ENCODE measurements at regions of chr10 and their contacts with region 1.

Region 1: DNA sequence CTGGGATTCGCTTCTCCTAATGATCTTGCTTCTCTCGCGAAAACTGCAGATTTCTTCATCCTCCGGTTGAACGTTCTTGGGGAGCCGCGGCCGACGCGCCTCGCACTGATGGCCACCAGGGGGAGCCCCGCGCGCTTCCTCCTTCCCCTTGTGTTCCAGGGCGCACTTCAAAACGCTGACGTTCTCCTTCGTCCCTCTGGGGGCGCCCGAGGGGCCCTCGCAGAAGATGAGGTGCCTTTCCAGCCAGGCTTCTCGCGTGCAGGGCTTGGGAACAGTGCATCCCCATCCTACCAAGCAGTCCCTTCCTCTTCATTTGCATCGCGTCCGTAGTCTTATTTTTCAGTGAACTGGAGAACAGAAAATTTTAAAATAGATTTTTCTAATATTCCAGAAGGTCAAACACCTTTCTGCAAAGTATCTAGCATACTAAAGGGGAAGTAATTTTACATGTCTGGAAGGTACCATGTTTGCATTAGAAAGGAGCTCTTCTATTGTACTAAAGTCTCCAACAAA is 22.5 kb downstream of the GSTO2 start:
- DNase-seq: peak; percentile 83 to 86 (median 85)
- H3K4me3 ChIP-seq: no peak overlapping the region
- H3K4me3 Mint-ChIP-seq: peak overlapping the region in 2 of 8 donors; percentile 26 to 74
- H3K27ac ChIP-seq: no peak overlapping the region
- H3K27ac Mint-ChIP-seq: peak overlapping the region in 2 of 7 donors; percentile 24 to 25
- H3K4me1 ChIP-seq: peaks cover 5% of the 10 kb centered on the region
- H3K4me1 Mint-ChIP-seq: peaks cover 4 to 6% (median 5%) of the 10 kb centered on the region in 4 donors
- H3K27me3 ChIP-seq: no peaks in the 10 kb centered on the region
- H3K27me3 Mint-ChIP-seq: peaks cover 11 to 20% of the 10 kb centered on the region in 2 donors

Region 2: GRCh38 chr10:104260775-104261115 is 30.8 kb before region 1 on chr10:
- CTCF ChIA-PET with region 1: interaction called, 13 read pairs
- POLR2A ChIA-PET with region 1: no interaction called
- intact Hi-C with region 1: no loop called
- DNase-seq: no peak
- H3K4me3 ChIP-seq: no peak overlapping the region
- H3K4me3 Mint-ChIP-seq: peak overlapping the region in 6 of 8 donors; percentile 12 to 34 (median 18)
- H3K27ac ChIP-seq: peak overlapping the region; percentile 17
- H3K27ac Mint-ChIP-seq: peak overlapping the region; percentile 48 to 90 (median 64)
- H3K4me1 ChIP-seq: peaks cover 95% of the 10 kb centered on the region
- H3K4me1 Mint-ChIP-seq: peaks cover 60 to 89% (median 76%) of the 10 kb centered on the region in 4 donors
- H3K27me3 ChIP-seq: no peaks in the 10 kb centered on the region
- H3K27me3 Mint-ChIP-seq: no peaks in the 10 kb centered on the region

Region 3: DNA sequence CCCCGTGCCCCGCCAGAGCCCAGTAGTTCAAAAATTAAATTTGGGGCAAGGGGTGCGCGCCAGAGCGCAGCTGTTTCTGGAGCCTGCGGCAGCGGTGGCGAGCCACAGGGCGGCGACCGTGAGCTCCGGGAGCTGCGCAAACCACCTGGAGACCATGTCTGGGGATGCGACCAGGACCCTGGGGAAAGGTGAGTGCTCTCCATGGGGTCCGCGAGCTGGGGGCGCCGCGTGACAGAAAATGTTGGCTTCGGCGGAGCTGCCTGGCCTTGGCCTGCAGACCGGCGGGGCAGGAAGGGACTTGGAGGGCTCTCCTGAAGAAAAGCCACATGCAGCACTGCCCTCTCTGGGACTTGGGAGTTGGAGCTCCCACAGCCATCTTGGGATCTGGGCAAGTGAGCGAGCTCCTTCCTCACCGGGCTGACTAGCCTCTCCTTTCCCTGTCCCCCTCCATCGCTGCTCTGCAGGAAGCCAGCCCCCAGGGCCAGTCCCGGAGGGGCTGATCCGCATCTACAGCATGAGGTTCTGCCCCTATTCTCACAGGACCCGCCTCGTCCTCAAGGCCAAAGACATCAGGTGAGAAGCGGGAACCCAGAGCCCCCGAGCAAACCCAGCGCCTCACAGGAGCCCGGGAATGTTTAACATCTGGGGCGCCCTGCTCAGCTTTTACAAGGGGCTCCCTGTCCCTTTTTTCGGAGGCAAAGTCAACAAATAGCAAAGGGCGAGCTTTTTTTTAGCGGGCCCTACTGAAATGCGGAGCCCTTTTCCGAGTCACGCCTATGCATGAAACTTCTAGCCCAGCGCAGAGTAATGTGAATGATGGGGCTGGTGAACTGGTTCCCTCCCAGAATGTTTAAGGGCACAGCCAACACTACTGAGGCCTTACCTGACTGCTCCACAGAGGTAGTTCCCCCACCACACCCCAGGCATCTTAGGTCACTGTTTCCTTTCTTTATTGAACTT is 16.5 kb before region 1 on chr10:
- CTCF ChIA-PET with region 1: interaction called, 202 read pairs
- POLR2A ChIA-PET with region 1: interaction called, 4 read pairs
- intact Hi-C with region 1: no loop called
- DNase-seq: peak in 3 of 5 donors; percentile 36 to 43 (median 40)
- H3K4me3 ChIP-seq: no peak overlapping the region
- H3K4me3 Mint-ChIP-seq: peak overlapping the region in 6 of 8 donors; percentile 10 to 71 (median 54)
- H3K27ac ChIP-seq: no peak overlapping the region
- H3K27ac Mint-ChIP-seq: peak overlapping the region in 1 of 7 donors; percentile 35
- H3K4me1 ChIP-seq: peaks cover 11% of the 10 kb centered on the region
- H3K4me1 Mint-ChIP-seq: no peaks in the 10 kb centered on the region
- H3K27me3 ChIP-seq: no peaks in the 10 kb centered on the region
- H3K27me3 Mint-ChIP-seq: peaks cover 9 to 10% of the 10 kb centered on the region in 2 donors

Region 4: DNA sequence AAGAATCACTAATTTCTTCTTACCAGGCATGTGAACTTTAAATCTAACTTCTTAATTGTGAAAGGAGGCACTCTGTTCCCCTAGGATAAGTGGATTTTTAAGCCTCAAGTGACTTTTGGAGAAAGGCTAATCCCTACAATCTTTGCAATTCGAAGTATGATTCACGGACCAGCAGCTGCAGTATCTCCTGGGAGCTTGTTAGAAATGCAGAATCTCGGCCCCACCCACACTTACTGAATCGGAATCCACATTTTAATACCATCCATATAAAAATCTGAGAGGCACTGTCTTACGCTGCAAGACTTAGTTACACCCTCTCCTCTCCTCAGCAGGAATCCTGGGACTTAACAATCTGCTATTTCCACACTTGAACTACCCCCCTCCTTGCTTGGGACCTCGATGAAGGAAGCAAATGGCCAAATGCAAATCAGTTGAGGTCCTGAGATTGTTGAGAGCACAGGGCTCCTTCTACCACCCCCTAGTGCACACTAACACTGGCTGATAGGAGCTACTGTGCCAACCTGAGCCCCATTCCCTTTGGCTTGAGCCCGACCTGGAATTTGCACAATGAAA is 25.8 kb after region 1 on chr10:
- CTCF ChIA-PET with region 1: interaction called, 47 read pairs
- POLR2A ChIA-PET with region 1: no interaction called
- intact Hi-C with region 1: no loop called
- DNase-seq: no peak
- H3K4me3 ChIP-seq: no peak overlapping the region
- H3K4me3 Mint-ChIP-seq: no peak overlapping the region
- H3K27ac ChIP-seq: no peak overlapping the region
- H3K27ac Mint-ChIP-seq: peak overlapping the region in 3 of 7 donors; percentile 17 to 64 (median 19)
- H3K4me1 ChIP-seq: peaks cover 33% of the 10 kb centered on the region
- H3K4me1 Mint-ChIP-seq: peaks cover 26 to 62% (median 48%) of the 10 kb centered on the region in 4 donors
- H3K27me3 ChIP-seq: no peaks in the 10 kb centered on the region
- H3K27me3 Mint-ChIP-seq: no peaks in the 10 kb centered on the region

Region 5: GRCh38 chr10:104328896-104329710 is 37.6 kb after region 1 on chr10:
- CTCF ChIA-PET with region 1: interaction called, 17 read pairs
- POLR2A ChIA-PET with region 1: no interaction called
- intact Hi-C with region 1: no loop called
- DNase-seq: peak; percentile 73 to 96 (median 77)
- H3K4me3 ChIP-seq: peak overlapping the region; percentile 26 to 32
- H3K4me3 Mint-ChIP-seq: peak overlapping the region; percentile 75 to 90 (median 82)
- H3K27ac ChIP-seq: peak overlapping the region; percentile 64
- H3K27ac Mint-ChIP-seq: peak overlapping the region; percentile 89 to 98 (median 96)
- H3K4me1 ChIP-seq: peaks cover 100% of the 10 kb centered on the region
- H3K4me1 Mint-ChIP-seq: peaks cover 68 to 100% (median 93%) of the 10 kb centered on the region in 4 donors
- H3K27me3 ChIP-seq: no peaks in the 10 kb centered on the region
- H3K27me3 Mint-ChIP-seq: no peaks in the 10 kb centered on the region

Region 6: DNA sequence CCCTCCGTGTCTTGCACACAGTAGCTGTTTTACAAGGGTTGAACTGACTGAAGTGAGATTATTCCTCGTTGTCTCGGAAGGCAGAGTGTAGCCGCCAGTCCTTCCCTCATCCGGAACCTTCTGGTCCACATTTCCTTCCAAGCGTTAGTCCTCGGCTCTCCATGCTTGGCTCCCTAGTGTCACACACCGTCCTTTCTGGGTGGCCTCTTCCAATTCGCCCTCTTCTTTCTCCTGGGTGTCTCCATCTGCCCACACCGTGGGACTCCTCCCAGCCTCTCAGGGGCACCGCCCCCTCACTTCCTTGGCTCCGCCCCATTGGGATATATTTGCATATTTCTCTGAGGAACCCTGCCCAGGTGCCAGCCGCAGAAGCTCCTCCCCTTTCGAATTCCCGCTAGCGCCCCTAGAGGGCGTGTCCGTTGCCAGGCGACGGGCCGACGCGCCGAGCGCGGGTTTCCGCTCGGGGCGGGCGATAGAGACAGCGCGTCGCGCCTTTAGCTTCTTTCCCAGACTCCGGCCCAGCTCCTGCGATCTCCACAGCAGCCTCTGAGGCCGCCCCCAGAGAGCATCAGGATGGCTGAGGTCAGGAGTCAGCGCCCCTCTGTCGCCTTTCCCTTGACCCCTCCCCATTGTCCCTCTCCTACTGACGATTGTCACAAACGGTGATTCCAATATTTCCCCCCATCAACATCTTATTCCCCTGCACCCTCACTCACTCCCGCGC is 62.0 kb after region 1 on chr10 and contains the start of gene CFAP58:
- CTCF ChIA-PET with region 1: interaction called, 481 read pairs
- POLR2A ChIA-PET with region 1: interaction called, 10 read pairs
- intact Hi-C with region 1: loop called (anchors 1 kb)
- DNase-seq: peak; percentile 87 to 91 (median 88)
- H3K4me3 ChIP-seq: peak within 1 kb of the TSS; percentile 17 to 58
- H3K4me3 Mint-ChIP-seq: peak within 1 kb of the TSS in 3 of 8 donors; percentile 41 to 72 (median 61)
- H3K27ac ChIP-seq: peak within 1 kb of the TSS; percentile 18
- H3K27ac Mint-ChIP-seq: peak within 1 kb of the TSS in 4 of 7 donors; percentile 34 to 66 (median 46)
- H3K4me1 ChIP-seq: peaks cover 33% of the 10 kb centered on the region
- H3K4me1 Mint-ChIP-seq: peaks cover 0 to 19% (median 14%) of the 10 kb centered on the region in 4 donors
- H3K27me3 ChIP-seq: no peaks in the 10 kb centered on the region
- H3K27me3 Mint-ChIP-seq: no peaks in the 10 kb centered on the region
- total RNA-seq, gene CFAP58: not detected